GM13976 (cell line): ENCODE measurements at regions of chr15 and their contacts with region 1.

Region 1: GRCh38 chr15:32994810-32995424 is 199.6 kb downstream of the FMN1 start:
- DNase-seq: peak; percentile 24
- CTCF ChIP-seq: no peak

Region 2: GRCh38 chr15:32651229-32651837 is 343.6 kb before region 1 on chr15:
- in situ Hi-C with region 1: loop called (anchors 25 kb)
- DNase-seq: peak; percentile 82
- CTCF ChIP-seq: peak; percentile 85

Region 3: DNA sequence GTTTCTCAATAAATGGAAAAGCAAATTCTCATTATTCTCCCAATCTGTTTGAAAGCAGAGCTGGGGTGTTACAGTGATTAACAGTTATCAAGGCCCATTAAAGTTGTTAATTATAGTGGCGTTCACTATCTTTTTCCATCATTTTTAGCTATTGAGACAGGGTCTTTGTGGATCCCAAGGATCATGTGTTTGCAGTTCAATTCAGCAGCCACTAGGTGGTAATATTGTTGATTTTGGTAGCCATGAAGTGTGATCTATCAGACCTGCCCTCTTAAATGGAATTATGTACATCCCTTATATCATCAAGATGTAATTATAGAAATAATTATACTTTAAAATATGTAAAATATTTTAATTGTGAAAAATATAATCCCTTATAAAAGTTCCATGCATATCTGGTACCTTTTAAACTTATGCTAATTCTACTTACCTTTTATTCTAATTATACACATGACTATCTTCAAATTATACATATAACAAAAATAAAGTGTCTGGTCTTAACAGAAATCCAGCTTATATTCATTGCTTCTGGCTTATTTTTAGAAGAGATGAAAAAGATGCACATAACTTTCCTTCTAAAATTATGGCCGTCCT is 150.7 kb before region 1 on chr15:
- in situ Hi-C with region 1: loop called (anchors 10 kb)
- DNase-seq: peak; percentile 45
- CTCF ChIP-seq: peak; percentile 53